ENCODE measurements at regions of chr10 and their contacts with region 1.

Region 1: DNA sequence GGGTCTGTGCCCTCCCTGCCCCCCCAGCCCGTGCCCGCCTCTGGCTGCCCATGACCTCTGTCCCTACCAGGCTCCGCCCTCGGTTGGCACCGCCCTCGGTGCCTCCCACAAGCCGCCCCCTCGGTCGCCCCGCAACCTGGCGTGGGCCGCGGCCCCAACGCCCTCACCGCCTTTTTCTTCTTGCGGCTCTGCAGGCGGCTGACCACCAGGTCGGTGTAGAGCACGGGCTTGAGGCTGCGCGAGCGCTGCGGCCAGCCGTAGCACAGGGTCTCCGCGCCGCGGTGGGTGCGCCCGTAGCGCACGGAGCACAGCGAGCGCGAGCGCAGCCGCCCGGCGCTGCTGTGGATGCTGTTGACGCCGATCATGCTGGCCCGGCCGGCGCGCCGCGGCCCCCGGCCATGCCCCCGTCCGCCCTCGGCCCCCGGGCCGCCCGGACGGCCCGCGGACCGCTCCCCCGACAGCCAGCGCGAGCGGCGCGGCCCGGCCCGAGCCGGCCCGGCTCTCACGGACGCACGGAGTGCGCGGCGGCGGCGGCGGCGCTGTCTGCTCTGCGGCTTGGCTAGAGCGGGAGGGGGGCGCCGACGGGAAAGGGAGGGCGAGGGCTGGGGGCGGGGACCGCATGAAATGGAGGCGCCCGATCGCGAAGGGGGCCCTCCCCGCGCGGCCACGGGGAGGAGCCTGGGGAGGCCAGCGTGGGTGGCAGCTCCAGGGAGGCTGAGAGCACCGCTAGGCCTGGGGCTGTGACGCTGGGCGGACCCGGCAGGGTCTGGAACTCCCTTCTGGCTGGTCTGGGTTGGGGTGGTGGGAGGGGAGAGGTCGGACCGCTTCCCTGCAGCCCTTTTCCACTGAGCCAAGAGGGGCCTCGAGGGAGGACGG is 9.6 kb downstream of the PSD start:
- DNase-seq: peak; percentile 91
- H3K4me3 ChIP-seq: peak overlapping the region; percentile 51 to 61
- H3K27ac ChIP-seq: peak overlapping the region in 1 of 2 experiments; percentile 56; a peak in 2 of 4 replicates
- H3K4me1 ChIP-seq: peaks cover 0 to 31% of the 10 kb centered on the region in 2 experiments; a peak in 2 of 4 replicates
- H3K27me3 ChIP-seq: no peaks in the 10 kb centered on the region
- CTCF ChIP-seq: no peak
- EP300 ChIP-seq: no peak
- RAD21 ChIP-seq: no peak

Region 2: DNA sequence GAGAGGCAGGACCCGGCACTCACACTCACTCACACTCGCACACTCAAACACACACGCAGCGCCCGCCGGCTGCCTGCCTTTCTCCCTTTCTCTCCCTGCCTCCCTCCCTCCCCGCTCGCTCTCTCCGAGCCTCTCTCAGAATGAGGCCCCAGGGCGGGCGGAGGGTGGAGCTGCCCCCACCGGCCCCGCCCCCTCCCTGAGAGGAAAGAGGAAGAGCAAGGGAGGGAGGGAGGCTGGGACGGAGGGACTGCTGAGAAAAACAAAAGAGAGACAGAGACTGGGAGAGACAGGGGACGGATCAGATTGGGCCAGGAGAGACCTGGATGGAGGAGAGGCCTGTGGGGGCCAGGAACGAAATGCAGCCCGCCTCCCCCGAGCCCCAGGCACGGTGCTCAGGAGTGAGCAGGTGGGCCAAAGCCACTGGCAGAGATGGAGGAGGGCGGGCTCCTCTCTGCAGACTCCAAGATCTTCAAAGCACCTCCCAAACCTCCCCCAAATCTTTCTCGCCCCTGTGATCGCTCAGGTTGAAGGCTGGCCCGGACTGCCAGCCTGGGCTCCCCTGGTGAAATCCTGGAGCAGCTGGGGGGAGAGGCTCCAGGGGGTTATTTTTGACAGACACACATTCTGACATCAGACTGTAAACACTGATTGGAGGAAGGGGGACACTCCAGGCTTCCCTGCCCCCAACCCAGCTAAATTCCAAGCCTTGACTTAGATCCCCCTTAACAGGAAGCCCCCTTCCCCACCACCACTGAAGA is 293.9 kb before region 1 on chr10:
- CTCF ChIA-PET with region 1: no interaction called
- POLR2A ChIA-PET with region 1: no interaction called
- DNase-seq: peak; percentile 88
- H3K4me3 ChIP-seq: peak overlapping the region; percentile 67 to 72
- H3K27ac ChIP-seq: peak overlapping the region; percentile 86 to 95
- H3K4me1 ChIP-seq: peaks cover 41 to 53% of the 10 kb centered on the region in 2 experiments
- H3K27me3 ChIP-seq: no peaks in the 10 kb centered on the region
- CTCF ChIP-seq: no peak
- EP300 ChIP-seq: no peak
- RAD21 ChIP-seq: no peak

Region 3: DNA sequence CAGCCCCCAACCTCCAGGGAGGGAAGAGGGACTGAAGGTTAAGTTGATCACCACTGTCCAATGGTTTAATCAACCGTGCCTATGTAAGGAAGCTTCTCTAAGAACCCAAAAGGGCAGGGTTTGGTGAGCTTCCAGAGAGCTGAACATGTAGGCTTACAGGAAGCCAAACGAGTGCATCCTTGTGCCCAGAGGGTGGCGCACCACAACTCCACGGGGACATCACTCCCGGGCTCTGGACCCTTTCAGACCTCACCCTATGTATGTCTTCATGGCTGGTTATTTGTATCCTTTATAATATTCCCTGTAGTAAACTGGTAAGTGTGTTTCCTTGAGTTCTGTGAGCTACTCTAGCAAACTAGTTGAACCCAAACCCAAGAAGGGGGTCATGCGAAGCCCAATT is 24.9 kb before region 1 on chr10:
- CTCF ChIA-PET with region 1: interaction called, 13 read pairs
- POLR2A ChIA-PET with region 1: no interaction called
- DNase-seq: no peak
- H3K4me3 ChIP-seq: no peak overlapping the region
- H3K27ac ChIP-seq: no peak overlapping the region
- H3K4me1 ChIP-seq: no peaks in the 10 kb centered on the region; a peak in 1 of 4 replicates
- H3K27me3 ChIP-seq: no peaks in the 10 kb centered on the region
- CTCF ChIP-seq: peak; percentile 18; the same call in 1 of the 2 replicates
- EP300 ChIP-seq: no peak
- RAD21 ChIP-seq: no peak

Region 4: DNA sequence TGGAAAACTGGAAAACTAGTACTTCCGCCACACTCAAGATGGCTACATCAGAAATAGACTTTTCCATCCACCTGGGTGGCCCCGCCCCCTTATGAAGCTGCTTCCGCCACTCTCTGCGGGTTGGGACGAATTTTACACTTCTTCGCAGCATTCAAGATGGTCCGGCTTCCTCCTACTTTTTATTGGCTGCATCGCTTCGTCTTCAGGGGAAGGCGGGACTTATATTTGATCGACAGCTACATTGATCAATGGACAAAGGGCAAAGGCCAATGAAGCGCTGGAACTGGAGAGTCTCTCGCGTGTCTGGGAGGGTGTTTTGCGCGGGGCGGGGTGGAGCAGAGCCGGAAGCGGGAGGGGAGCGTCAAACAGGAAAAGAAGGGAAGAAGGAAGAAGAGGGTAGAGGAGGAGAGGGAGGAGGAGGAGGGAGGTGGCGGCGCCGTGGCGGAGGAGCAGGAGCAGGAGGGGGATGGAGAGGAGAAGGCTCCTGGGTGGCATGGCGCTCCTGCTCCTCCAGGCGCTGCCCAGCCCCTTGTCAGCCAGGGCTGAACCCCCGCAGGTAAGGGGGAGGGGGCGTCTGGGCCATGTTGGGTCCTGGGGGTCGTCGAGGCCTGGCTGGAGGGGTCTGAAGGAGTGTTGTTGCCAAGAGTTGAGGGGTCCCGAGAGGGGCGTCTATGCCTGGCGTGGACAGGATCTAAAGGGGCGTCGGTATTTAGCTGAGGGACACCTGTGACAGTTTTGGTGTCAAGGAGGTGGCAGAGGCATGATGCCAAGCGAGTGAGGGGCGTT is 334.8 kb after region 1 on chr10 and contains the start of gene WBP1L:
- CTCF ChIA-PET with region 1: no interaction called
- POLR2A ChIA-PET with region 1: no interaction called
- DNase-seq: peak; percentile 91
- H3K4me3 ChIP-seq: peak within 1 kb of the TSS; percentile 85 to 90
- H3K27ac ChIP-seq: peak within 1 kb of the TSS; percentile 48 to 68; a peak in 2 of 4 replicates
- H3K4me1 ChIP-seq: peaks cover 9 to 12% of the 10 kb centered on the region in 2 experiments; a peak in 1 of 4 replicates
- H3K27me3 ChIP-seq: no peaks in the 10 kb centered on the region
- CTCF ChIP-seq: no peak
- EP300 ChIP-seq: no peak; a peak in 1 of 4 replicates
- RAD21 ChIP-seq: no peak
- polyA plus RNA-seq, gene WBP1L: 22.8 and 29.8 TPM in 2 replicates

Measured in SK-N-SH (cell line).